ENCODE measurements at regions of chr15 and their contacts with region 1.

Region 1: GRCh38 chr15:75625542-75626347 is at the start of gene SNUPN:
- DNase-seq: peak; percentile 96
- H3K4me3 Mint-ChIP-seq: peak within 1 kb of the TSS; percentile 93
- H3K27ac Mint-ChIP-seq: peak within 1 kb of the TSS; percentile 96
- H3K4me1 Mint-ChIP-seq: peaks cover 38% of the 10 kb centered on the region
- H3K27me3 Mint-ChIP-seq: no peaks in the 10 kb centered on the region
- total RNA-seq, gene SNUPN: 29.6 to 30.9 TPM

Region 2: DNA sequence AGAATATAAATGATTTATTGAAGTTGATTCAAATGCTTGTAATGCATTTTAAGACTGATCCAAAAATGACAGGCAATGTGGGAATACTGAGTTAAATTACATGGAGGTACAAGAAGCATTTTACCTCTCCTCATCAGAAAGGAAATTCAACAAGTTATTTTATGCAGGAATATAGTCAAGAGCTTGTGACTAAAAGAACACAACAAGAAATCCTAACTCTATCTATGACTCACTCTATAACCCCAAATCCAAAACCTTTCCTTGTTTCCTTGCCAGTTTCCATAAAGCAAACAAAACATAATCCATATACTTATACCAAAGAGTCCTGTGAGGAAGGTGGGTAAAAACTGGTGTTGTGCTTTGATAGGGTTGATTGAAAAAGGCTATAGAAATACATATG is 205.0 kb before region 1 on chr15:
- CTCF ChIA-PET with region 1: no interaction called
- POLR2A ChIA-PET with region 1: no interaction called
- DNase-seq: no peak
- H3K4me3 Mint-ChIP-seq: no peak overlapping the region
- H3K27ac Mint-ChIP-seq: no peak overlapping the region
- H3K4me1 Mint-ChIP-seq: peaks cover 14% of the 10 kb centered on the region
- H3K27me3 Mint-ChIP-seq: no peaks in the 10 kb centered on the region

Region 3: DNA sequence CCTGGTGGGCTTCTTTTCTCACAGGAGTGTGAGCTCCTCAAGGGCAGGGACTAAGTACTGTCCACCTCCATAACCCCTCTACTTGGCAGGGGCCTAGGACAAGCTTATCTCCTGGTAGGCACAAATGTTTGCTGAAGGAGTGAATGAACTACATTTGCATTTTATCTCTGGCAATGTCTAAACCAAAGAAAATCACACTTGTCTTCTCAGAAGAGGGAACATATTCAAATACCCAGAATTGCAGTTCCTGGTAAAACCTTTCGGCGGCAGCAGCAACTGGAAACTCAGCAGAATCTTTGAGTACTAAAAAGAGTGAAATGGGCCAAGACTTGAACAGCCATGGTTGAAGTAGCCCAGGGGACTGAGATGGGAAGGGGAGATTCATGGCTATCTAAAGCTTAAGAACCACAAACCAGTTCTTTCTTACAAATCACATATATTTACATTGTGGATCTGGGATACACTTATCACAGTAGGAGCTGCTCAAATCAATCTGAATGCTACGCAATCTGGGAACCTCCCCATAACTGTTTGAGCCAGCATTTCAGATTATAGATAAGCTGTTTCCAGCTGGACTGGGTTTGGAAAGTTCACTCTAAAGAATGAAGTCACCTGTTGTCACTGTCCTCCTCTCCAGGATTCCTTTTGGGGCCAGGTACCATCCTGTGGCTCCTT is 27.9 kb before region 1 on chr15:
- CTCF ChIA-PET with region 1: interaction called, 9 read pairs
- POLR2A ChIA-PET with region 1: interaction called, 82 read pairs
- DNase-seq: peak; percentile 77
- H3K4me3 Mint-ChIP-seq: peak overlapping the region; percentile 53
- H3K27ac Mint-ChIP-seq: peak overlapping the region; percentile 96
- H3K4me1 Mint-ChIP-seq: peaks cover 50% of the 10 kb centered on the region
- H3K27me3 Mint-ChIP-seq: no peaks in the 10 kb centered on the region

Region 4: GRCh38 chr15:75606711-75607699 is 18.7 kb before region 1 on chr15:
- CTCF ChIA-PET with region 1: interaction called, 6 read pairs
- POLR2A ChIA-PET with region 1: interaction called, 56 read pairs
- DNase-seq: peak; percentile 70
- H3K4me3 Mint-ChIP-seq: peak overlapping the region; percentile 60
- H3K27ac Mint-ChIP-seq: peak overlapping the region; percentile 98
- H3K4me1 Mint-ChIP-seq: peaks cover 52% of the 10 kb centered on the region
- H3K27me3 Mint-ChIP-seq: no peaks in the 10 kb centered on the region

Region 5: GRCh38 chr15:75647370-75648155 is 21.8 kb after region 1 on chr15 and contains the start of gene SNX33:
- CTCF ChIA-PET with region 1: interaction called, 5 read pairs
- POLR2A ChIA-PET with region 1: interaction called, 162 read pairs
- DNase-seq: peak; percentile 60
- H3K4me3 Mint-ChIP-seq: peak within 1 kb of the TSS; percentile 79
- H3K27ac Mint-ChIP-seq: no peak within 1 kb of the TSS
- H3K4me1 Mint-ChIP-seq: peaks cover 29% of the 10 kb centered on the region
- H3K27me3 Mint-ChIP-seq: peaks cover 10% of the 10 kb centered on the region
- total RNA-seq, gene SNX33: 1.8 to 1.9 TPM

Measured in activated CD4-positive, alpha-beta memory T cell treated with anti-CD3 and anti-CD28 coated beads, Interleukin-2, amount 10 ng/mL, durations not matched to agents 7 days and 5 days (primary cell).